ENCODE measurements at regions of chr16 and their contacts with region 1.

Region 1: DNA sequence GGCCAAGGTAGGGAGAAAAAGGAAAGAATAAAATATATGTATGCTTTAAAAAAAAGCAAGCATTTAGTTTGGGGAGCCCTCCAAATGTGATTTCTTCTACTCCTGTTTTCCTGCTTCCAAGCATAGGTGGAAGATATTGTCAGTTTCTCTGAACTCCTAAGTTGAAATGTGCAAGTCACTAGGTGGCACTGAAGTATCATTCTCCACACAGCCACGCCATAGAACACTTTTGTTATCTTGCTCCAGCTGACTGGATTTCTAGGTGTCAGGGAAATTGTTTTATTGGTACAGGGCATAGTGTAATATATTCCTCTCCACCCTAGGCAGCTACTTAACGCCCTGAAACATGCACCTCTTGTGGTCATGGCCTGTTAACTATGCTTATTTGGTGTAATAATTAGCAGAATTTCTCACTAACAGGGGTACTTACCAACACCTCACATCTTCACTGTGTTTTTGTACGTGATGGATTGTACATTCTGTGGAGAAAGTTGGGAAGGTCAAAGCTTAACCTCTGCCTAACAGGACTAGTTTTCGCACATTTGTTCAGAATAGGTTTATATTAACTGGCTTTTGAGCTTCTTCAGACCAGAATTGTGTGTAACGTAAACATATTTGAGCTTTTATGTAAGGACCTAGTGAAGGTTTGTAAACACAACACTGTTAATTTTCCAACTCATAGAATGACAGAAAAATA is 69.3 kb downstream of the FTO start:
- DNase-seq: no peak
- H3K4me3 Mint-ChIP-seq: no peak overlapping the region
- H3K27ac Mint-ChIP-seq: no peak overlapping the region
- H3K4me1 Mint-ChIP-seq: peaks cover 30% of the 10 kb centered on the region
- H3K27me3 Mint-ChIP-seq: no peaks in the 10 kb centered on the region

Region 2: DNA sequence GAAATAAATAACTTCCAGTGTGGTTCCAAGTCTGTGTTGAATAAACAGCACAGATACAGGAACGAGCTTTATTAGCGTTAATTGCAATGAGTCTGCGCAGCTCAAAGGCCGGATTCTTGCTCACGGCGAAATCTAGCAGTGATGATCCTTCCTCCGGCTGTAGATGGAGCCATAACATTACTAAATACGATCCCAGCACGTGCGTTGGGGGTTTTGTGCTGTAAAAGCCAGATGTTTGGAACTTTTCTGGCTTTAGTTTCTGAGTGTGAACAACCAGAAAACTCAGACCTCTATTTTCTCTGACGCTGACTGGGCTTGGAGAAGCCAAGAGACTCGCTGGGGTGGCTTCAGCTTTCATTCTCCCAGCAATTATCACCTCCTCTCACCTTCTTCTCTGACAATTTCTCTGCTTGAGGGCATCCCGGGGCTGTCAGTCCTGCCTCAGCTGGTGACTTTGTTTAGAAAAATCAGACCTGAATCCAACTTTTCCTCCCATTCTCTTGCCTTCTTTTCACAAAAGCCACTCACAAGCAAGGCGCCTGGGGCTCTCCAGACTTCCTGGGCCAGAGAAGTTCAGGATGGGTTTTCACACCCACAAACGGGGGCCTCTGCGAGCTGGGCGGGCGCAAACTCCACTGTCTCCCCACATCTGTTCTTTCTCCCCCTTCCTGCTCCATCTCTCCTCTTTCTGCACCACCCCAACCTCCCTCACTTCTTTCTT is 223.2 kb before region 1 on chr16:
- intact Hi-C with region 1: loop called (anchors 10 kb)
- DNase-seq: peak; percentile 17
- H3K4me3 Mint-ChIP-seq: no peak overlapping the region
- H3K27ac Mint-ChIP-seq: no peak overlapping the region
- H3K4me1 Mint-ChIP-seq: peaks cover 34% of the 10 kb centered on the region
- H3K27me3 Mint-ChIP-seq: peaks cover 26% of the 10 kb centered on the region

Region 3: GRCh38 chr16:53872248-53873221 is 99.2 kb after region 1 on chr16:
- intact Hi-C with region 1: loop called (anchors 5 kb)
- DNase-seq: no peak
- H3K4me3 Mint-ChIP-seq: peak overlapping the region; percentile 11
- H3K27ac Mint-ChIP-seq: peak overlapping the region; percentile 82
- H3K4me1 Mint-ChIP-seq: peaks cover 26% of the 10 kb centered on the region
- H3K27me3 Mint-ChIP-seq: no peaks in the 10 kb centered on the region

Region 4: DNA sequence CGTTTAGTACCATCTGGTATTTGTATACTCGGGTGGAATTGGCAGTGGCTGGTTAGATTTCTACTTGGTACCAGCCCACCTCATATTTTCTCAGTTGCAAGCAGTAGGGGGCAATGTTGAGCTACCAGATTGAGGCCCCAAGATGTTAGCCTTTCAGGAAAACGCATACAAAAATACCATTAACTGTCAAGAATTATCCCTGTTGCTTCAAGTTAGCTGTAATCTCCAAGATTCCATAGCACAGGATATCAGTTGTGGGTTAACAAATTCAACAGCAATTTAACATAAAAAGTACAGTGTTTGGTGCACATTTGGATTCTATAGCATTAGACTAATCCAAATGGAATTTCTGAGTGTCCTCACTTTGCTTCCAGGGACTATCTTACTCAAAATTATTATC is 118.9 kb after region 1 on chr16:
- intact Hi-C with region 1: loop called (anchors 2 kb)
- DNase-seq: peak; percentile 52
- H3K4me3 Mint-ChIP-seq: peak overlapping the region; percentile 5
- H3K27ac Mint-ChIP-seq: peak overlapping the region; percentile 60
- H3K4me1 Mint-ChIP-seq: peaks cover 42% of the 10 kb centered on the region
- H3K27me3 Mint-ChIP-seq: no peaks in the 10 kb centered on the region